CD4-positive, alpha-beta memory T cell (primary cell): ENCODE measurements at regions of chr5 and their contacts with region 1.

Region 1: GRCh38 chr5:65481635-65482295 is at the start of gene ADAMTS6:
- DNase-seq: peak; percentile 64 to 83 (median 69)
- H3K4me3 ChIP-seq: peak within 1 kb of the TSS; percentile 56 to 89
- H3K4me3 Mint-ChIP-seq: peak within 1 kb of the TSS in 3 of 8 donors; percentile 88 to 97 (median 94)
- H3K27ac ChIP-seq: peak within 1 kb of the TSS; percentile 62
- H3K27ac Mint-ChIP-seq: peak within 1 kb of the TSS; percentile 86 to 96 (median 93)
- H3K4me1 ChIP-seq: peaks cover 27% of the 10 kb centered on the region
- H3K4me1 Mint-ChIP-seq: peaks cover 5 to 22% (median 8%) of the 10 kb centered on the region in 4 donors
- H3K27me3 ChIP-seq: peaks cover 10% of the 10 kb centered on the region
- H3K27me3 Mint-ChIP-seq: peaks cover 0 to 3% of the 10 kb centered on the region in 2 donors
- total RNA-seq, gene ADAMTS6: 0.89 to 1.8 TPM

Region 2: DNA sequence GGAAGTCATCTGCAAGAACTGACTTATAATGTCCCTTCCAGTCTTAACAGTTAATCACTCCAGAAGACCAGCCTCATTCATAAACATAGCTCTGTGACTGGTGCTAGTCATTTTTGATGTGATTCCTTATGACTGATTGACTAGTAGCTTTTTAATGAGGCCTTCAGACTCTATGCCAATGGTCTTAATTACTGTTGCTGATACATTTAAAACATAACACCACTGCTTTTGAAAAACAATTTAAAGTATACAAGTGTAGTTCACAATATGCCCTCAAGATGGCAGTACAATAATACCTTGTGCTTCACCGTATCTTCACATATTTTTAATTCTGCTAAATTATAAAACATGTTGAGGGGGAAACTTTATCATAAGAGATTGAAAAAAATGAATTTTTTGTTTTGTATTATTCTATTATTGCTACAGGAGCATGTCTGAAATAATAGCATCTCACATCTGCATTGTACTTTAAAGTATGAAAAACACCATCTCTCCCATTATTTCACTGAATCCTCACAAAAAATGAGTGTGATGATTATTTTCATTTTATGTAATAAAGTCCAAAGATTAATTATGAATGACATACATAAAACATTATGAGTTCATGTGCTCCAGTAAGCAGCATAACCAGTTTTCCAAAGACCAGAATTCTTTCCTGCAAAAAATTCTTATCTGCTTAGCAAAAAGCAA is 846.6 kb before region 1 on chr5:
- CTCF ChIA-PET with region 1: interaction called, 17 read pairs
- POLR2A ChIA-PET with region 1: no interaction called
- intact Hi-C with region 1: loop called (anchors 1 kb)
- DNase-seq: peak in 4 of 5 donors; percentile 23 to 34 (median 28)
- H3K4me3 ChIP-seq: no peak overlapping the region
- H3K4me3 Mint-ChIP-seq: no peak overlapping the region
- H3K27ac ChIP-seq: no peak overlapping the region
- H3K27ac Mint-ChIP-seq: no peak overlapping the region
- H3K4me1 ChIP-seq: no peaks in the 10 kb centered on the region
- H3K4me1 Mint-ChIP-seq: peaks cover 0 to 5% (median 2%) of the 10 kb centered on the region in 4 donors
- H3K27me3 ChIP-seq: no peaks in the 10 kb centered on the region
- H3K27me3 Mint-ChIP-seq: peaks cover 14 to 20% of the 10 kb centered on the region in 2 donors

Region 3: DNA sequence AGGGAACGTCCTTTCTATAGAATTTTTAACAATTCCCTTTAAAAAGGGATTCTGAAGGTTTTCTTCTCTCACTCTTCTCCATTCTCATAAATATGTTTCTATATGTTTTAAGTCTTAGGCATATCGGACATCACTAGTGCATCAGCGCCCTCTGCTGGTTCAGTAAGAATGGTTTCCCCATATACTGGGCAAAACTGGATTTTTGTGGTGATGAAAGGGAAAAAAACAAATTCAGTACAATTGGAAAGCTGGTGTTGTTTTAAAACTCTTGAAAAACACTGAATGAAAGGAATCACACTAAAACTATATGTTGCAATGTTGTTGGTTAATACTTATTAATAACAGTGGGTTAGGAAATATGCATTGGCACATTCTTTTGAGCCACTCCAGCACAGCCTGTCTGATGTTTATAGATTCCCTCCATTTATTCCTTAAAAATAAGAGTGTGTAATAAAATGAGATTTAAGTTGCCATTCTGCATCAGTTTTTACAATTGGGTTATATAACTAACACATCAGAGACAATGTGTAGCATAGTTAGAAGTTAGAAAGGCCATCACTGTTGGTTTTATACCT is 697.2 kb before region 1 on chr5:
- CTCF ChIA-PET with region 1: interaction called, 12 read pairs
- POLR2A ChIA-PET with region 1: no interaction called
- intact Hi-C with region 1: no loop called
- DNase-seq: peak; percentile 65 to 72 (median 69)
- H3K4me3 ChIP-seq: no peak overlapping the region
- H3K4me3 Mint-ChIP-seq: no peak overlapping the region
- H3K27ac ChIP-seq: no peak overlapping the region
- H3K27ac Mint-ChIP-seq: no peak overlapping the region
- H3K4me1 ChIP-seq: no peaks in the 10 kb centered on the region
- H3K4me1 Mint-ChIP-seq: peaks cover 6 to 9% (median 6%) of the 10 kb centered on the region in 4 donors
- H3K27me3 ChIP-seq: no peaks in the 10 kb centered on the region
- H3K27me3 Mint-ChIP-seq: no peaks in the 10 kb centered on the region

Region 4: DNA sequence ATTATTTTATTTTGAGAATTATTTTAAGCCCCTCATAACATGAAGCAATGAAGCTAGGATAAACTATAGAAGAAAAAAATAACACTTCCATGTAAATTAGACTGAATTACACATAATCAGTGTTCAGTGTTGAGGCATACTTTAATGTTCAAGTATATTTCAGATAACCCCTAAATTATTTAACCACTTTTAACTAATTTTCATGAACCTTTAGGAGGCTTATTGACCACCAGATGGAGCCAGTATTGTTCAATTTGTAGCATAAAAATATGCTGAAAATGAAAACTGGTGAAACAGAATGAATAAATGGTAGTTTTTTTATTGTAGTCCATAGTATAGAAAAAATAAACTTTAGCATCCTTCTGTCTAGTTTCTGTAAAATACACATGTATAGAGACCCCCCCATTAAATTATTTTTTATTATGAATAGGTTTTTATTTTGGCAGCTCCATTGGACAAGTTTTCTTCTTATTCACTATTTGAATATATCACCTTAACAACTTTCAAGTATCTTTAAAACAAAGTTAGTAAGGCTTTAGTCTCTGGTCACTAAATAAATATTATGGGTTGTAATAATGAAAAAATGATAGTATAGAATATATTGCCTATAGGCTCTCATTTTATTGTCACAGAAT is 522.9 kb before region 1 on chr5:
- CTCF ChIA-PET with region 1: interaction called, 51 read pairs
- POLR2A ChIA-PET with region 1: interaction called, 5 read pairs
- intact Hi-C with region 1: loop called (anchors 1 kb)
- DNase-seq: peak in 4 of 5 donors; percentile 6 to 21 (median 11)
- H3K4me3 ChIP-seq: no peak overlapping the region
- H3K4me3 Mint-ChIP-seq: no peak overlapping the region
- H3K27ac ChIP-seq: no peak overlapping the region
- H3K27ac Mint-ChIP-seq: no peak overlapping the region
- H3K4me1 ChIP-seq: no peaks in the 10 kb centered on the region
- H3K4me1 Mint-ChIP-seq: no peaks in the 10 kb centered on the region
- H3K27me3 ChIP-seq: no peaks in the 10 kb centered on the region
- H3K27me3 Mint-ChIP-seq: no peaks in the 10 kb centered on the region

Region 5: GRCh38 chr5:65076251-65076869 is 405.4 kb before region 1 on chr5:
- CTCF ChIA-PET with region 1: interaction called, 11 read pairs
- POLR2A ChIA-PET with region 1: interaction called, 3 read pairs
- intact Hi-C with region 1: loop called (anchors 1 kb)
- DNase-seq: peak; percentile 46 to 63 (median 53)
- H3K4me3 ChIP-seq: no peak overlapping the region
- H3K4me3 Mint-ChIP-seq: no peak overlapping the region
- H3K27ac ChIP-seq: no peak overlapping the region
- H3K27ac Mint-ChIP-seq: peak overlapping the region in 1 of 7 donors; percentile 43
- H3K4me1 ChIP-seq: no peaks in the 10 kb centered on the region
- H3K4me1 Mint-ChIP-seq: peaks cover 0 to 5% (median 5%) of the 10 kb centered on the region in 4 donors
- H3K27me3 ChIP-seq: no peaks in the 10 kb centered on the region
- H3K27me3 Mint-ChIP-seq: peaks cover 2 to 7% of the 10 kb centered on the region in 2 donors

Region 6: GRCh38 chr5:65562731-65563701 is 81.3 kb after region 1 on chr5 and contains the starts of genes CENPK and PPWD1:
- CTCF ChIA-PET with region 1: interaction called, 7 read pairs
- POLR2A ChIA-PET with region 1: interaction called, 42 read pairs
- intact Hi-C with region 1: no loop called
- DNase-seq: peak; percentile 93 to 97 (median 96)
- H3K4me3 ChIP-seq: peak within 1 kb of the TSS; percentile 73 to 80
- H3K4me3 Mint-ChIP-seq: peak within 1 kb of the TSS; percentile 98 to 99 (median 98)
- H3K27ac ChIP-seq: peak within 1 kb of the TSS; percentile 92
- H3K27ac Mint-ChIP-seq: peak within 1 kb of the TSS; percentile 96 to 99 (median 99)
- H3K4me1 ChIP-seq: peaks cover 54% of the 10 kb centered on the region
- H3K4me1 Mint-ChIP-seq: peaks cover 32 to 58% (median 41%) of the 10 kb centered on the region in 4 donors
- H3K27me3 ChIP-seq: no peaks in the 10 kb centered on the region
- H3K27me3 Mint-ChIP-seq: no peaks in the 10 kb centered on the region
- total RNA-seq, gene CENPK: 13.6 to 15.4 TPM
- total RNA-seq, gene PPWD1: 102 to 104 TPM

Region 7: DNA sequence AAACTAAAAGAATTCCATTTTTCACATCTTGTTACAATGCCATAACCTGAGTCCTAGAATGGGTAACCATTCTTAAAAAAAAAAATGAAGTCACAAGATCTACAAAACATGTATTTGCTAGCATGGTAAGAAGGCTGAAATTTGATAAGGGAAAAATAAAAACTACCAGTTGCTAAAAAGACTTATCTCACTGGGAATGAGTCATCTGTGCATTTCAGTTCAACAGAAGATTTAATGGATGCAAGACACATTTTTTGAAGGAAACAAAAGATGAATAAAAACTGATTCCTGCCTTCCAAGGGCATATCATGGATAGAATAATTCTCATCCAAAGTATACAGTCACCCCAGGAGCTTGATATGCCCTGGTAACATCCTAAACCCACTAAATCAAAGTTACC is 193.0 kb after region 1 on chr5:
- CTCF ChIA-PET with region 1: no interaction called
- POLR2A ChIA-PET with region 1: no interaction called
- intact Hi-C with region 1: no loop called
- DNase-seq: no peak
- H3K4me3 ChIP-seq: no peak overlapping the region
- H3K4me3 Mint-ChIP-seq: no peak overlapping the region
- H3K27ac ChIP-seq: no peak overlapping the region
- H3K27ac Mint-ChIP-seq: peak overlapping the region in 6 of 7 donors; percentile 30 to 64 (median 52)
- H3K4me1 ChIP-seq: peaks cover 6% of the 10 kb centered on the region
- H3K4me1 Mint-ChIP-seq: peaks cover 26 to 45% (median 35%) of the 10 kb centered on the region in 4 donors
- H3K27me3 ChIP-seq: no peaks in the 10 kb centered on the region
- H3K27me3 Mint-ChIP-seq: no peaks in the 10 kb centered on the region